H1 (cell line): ENCODE measurements at regions of chr10 and their contacts with region 1.

Region 1: GRCh38 chr10:121281571-121281970 is 316.7 kb downstream of the FGFR2 start:
- DNase-seq: no peak
- H3K4me3 ChIP-seq: no peak overlapping the region
- H3K27ac ChIP-seq: no peak overlapping the region
- H3K4me1 ChIP-seq: peaks cover 0 to 4% (median 1%) of the 10 kb centered on the region in 4 experiments; a peak in 3 of 7 replicates
- H3K27me3 ChIP-seq: no peaks in the 10 kb centered on the region
- CTCF ChIP-seq: no peak
- EP300 ChIP-seq: no peak
- POLR2A ChIP-seq: no peak
- RAD21 ChIP-seq: no peak

Region 2: GRCh38 chr10:121270906-121271305 is 10.7 kb before region 1 on chr10:
- CTCF ChIA-PET with region 1: interaction called, 15 read pairs
- POLR2A ChIA-PET with region 1: no interaction called
- DNase-seq: no peak
- H3K4me3 ChIP-seq: no peak overlapping the region
- H3K27ac ChIP-seq: no peak overlapping the region
- H3K4me1 ChIP-seq: no peaks in the 10 kb centered on the region
- H3K27me3 ChIP-seq: no peaks in the 10 kb centered on the region
- CTCF ChIP-seq: no peak
- EP300 ChIP-seq: no peak
- POLR2A ChIP-seq: no peak
- RAD21 ChIP-seq: no peak

Region 3: GRCh38 chr10:121373411-121373810 is 91.8 kb after region 1 on chr10:
- CTCF ChIA-PET with region 1: no interaction called
- POLR2A ChIA-PET with region 1: no interaction called
- DNase-seq: no peak
- H3K4me3 ChIP-seq: no peak overlapping the region
- H3K27ac ChIP-seq: no peak overlapping the region
- H3K4me1 ChIP-seq: peaks cover 0 to 6% (median 0%) of the 10 kb centered on the region in 4 experiments; a peak in 3 of 7 replicates
- H3K27me3 ChIP-seq: no peaks in the 10 kb centered on the region
- CTCF ChIP-seq: no peak
- EP300 ChIP-seq: no peak
- POLR2A ChIP-seq: no peak
- RAD21 ChIP-seq: no peak